Head of caudate nucleus (tissue), 42 donors: ENCODE measurements at regions of chr14 and their contacts with region 1.

Region 1: GRCh38 chr14:30356438-30357202 is 202.3 kb upstream of the G2E3 start:
- DNase-seq: no peak

Region 2: DNA sequence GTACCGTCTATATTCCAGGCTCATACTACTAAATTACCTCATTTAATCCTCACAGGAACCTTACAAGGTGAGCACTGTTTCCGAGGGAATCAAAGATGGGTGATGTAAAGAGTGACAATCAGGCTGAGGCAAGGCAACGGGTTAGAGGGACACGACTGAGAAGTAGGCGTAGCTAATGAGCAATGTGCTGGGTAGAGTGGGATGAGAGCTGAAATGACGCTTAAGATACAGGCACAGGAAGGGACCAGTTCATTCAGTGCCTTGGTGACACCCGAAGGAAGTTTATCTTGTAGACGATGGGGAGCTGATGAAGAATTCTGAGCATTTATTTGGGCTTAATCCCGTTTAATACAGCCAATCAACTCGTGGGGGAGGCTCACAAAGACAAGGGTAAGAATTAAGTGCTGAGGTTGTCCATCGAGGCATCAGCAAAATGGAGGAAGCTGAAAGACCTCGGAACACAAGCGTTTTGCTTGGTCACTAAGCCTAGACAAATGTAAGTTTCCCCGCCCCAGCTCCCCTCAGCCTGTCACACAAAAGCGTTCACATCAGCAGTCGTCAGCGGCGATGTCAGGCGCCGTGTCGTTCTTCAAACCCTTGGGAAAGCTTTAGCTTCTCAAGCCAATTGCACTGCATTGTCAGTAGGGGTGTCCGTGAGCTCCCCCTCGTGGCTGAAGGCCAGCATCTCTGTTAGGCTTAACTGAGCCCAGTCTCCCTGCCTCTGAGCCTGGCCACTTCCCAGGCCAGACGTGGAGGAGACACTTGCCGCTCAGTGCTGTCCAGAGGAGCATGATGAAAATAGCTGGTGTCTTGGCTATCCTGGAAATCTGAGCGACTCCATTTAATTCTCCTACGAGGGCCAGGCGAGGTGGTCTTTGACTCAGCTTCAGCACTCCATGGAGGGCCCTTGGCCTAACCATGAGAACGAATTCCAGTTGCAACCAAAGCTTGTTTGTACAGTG is 86.1 kb before region 1 on chr14:
- intact Hi-C with region 1: no loop called
- DNase-seq: peak; percentile 61 to 93 (median 85)

Region 3: GRCh38 chr14:30317729-30318128 is 38.9 kb before region 1 on chr14:
- intact Hi-C with region 1: loop called (anchors 2 kb)
- DNase-seq: no peak

Region 4: GRCh38 chr14:30333934-30334333 is 22.7 kb before region 1 on chr14:
- intact Hi-C with region 1: no loop called
- DNase-seq: no peak